HepG2 (cell line): ENCODE measurements at regions of chr16 and their contacts with region 1.

Region 1: GRCh38 chr16:6081320-6081976 is 983.9 kb upstream of the EEF2KMT start:
- DNase-seq: peak; percentile 20
- ATAC-seq: peak; percentile 53
- H3K4me3 ChIP-seq: no peak overlapping the region
- H3K27ac ChIP-seq: no peak overlapping the region
- H3K4me1 ChIP-seq: no peaks in the 10 kb centered on the region
- H3K27me3 ChIP-seq: no peaks in the 10 kb centered on the region
- CTCF ChIP-seq: peak; percentile 72
- EP300 ChIP-seq: no peak
- POLR2A ChIP-seq: no peak
- RAD21 ChIP-seq: no peak

Region 2: DNA sequence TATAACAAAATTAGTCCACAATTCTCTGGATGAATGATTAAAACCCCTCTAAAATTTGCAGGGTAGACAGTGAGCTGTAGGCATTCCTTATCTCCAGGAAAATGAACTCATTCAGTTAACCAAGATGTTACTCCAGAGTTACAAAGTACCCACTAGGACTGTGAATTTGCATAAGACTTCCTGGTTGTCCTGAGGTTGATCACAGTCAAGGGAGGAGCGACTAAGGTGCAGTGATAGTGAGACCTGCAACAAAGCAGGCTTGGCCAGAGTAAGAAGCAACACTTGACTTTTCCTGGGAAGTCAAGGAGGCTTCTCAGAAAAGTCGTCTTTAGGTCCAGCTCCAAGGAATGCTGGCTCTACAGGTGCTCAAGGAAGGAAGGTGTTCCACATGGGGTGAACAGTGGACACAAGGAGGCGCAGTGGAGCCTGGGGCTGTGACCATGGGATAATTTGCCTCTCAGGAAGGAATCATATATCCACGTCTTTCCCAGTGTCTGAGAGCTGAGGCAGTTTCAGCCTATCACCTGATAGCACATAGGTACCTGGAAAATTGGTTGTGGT is 162.8 kb before region 1 on chr16:
- CTCF ChIA-PET with region 1: no interaction called
- POLR2A ChIA-PET with region 1: no interaction called
- in situ Hi-C with region 1: no loop called
- intact Hi-C with region 1: loop called (anchors 2 kb)
- DNase-seq: peak; percentile 2
- ATAC-seq: peak; percentile 40; the same call in 1 of the 3 replicates
- H3K4me3 ChIP-seq: no peak overlapping the region
- H3K27ac ChIP-seq: no peak overlapping the region
- H3K4me1 ChIP-seq: no peaks in the 10 kb centered on the region
- H3K27me3 ChIP-seq: no peaks in the 10 kb centered on the region
- CTCF ChIP-seq: peak; percentile 38
- EP300 ChIP-seq: no peak
- POLR2A ChIP-seq: no peak
- RAD21 ChIP-seq: no peak

Region 3: DNA sequence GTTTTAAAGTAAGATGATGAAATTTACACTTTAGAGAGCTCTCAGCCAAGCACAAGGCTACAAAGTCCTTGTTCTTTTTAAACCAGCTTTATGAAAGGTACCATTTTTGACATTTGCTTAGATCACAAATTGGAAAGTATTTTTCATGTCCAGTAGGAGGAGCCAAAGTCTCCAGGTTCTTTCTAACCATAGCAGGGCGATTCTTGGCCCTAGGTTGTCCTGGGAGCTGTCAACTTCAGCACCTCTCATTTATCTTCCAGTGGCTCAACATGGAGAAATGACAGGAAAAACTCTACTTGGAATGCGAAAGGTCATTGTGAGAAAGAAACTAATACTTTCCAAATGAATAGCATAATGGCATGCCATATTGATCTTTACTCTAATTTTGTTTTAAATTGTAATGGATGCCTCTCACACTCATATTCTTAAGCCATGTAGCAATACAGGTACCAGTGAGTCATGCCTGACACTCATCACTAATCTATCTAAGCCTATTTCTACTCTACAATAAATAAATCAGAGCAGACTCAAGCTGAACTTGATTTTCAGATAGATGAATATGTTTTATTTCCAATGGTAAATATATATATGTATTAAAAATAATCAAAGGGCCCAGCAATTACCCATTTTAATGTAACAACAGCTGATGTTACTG is 64.8 kb before region 1 on chr16:
- CTCF ChIA-PET with region 1: interaction called, 3 read pairs
- POLR2A ChIA-PET with region 1: no interaction called
- in situ Hi-C with region 1: no loop called
- intact Hi-C with region 1: loop called (anchors 10 kb)
- DNase-seq: peak; percentile 29
- ATAC-seq: peak; percentile 67; the same call in 2 of the 3 replicates
- H3K4me3 ChIP-seq: no peak overlapping the region
- H3K27ac ChIP-seq: no peak overlapping the region
- H3K4me1 ChIP-seq: no peaks in the 10 kb centered on the region
- H3K27me3 ChIP-seq: peaks cover 0 to 3% of the 10 kb centered on the region in 2 experiments; a peak in 2 of 5 replicates
- CTCF ChIP-seq: peak; percentile 57
- EP300 ChIP-seq: no peak
- POLR2A ChIP-seq: no peak
- RAD21 ChIP-seq: no peak

Region 4: DNA sequence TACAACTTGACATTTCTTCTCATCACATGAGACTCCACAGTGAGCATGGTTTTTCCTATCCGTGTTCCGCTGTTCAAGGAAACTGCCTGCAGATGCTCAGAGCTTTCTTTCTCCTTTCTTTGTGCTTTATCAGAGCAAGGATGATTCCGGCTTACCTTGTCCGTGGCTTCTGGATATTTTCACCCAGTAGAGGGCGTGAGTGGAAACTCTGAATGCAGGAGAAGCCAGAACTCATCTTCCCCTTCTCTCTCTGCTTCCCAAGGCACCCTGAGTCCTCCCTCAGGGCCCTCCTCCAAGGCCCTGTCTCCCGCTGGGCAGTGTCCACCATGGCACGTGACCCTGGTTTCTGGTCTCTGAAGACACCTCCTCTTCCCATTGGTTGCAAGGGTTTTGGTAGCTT is 530.1 kb after region 1 on chr16:
- CTCF ChIA-PET with region 1: no interaction called
- POLR2A ChIA-PET with region 1: no interaction called
- in situ Hi-C with region 1: no loop called
- intact Hi-C with region 1: no loop called
- DNase-seq: no peak
- ATAC-seq: no peak
- H3K4me3 ChIP-seq: no peak overlapping the region
- H3K27ac ChIP-seq: no peak overlapping the region
- H3K4me1 ChIP-seq: no peaks in the 10 kb centered on the region
- H3K27me3 ChIP-seq: peaks cover 0 to 4% of the 10 kb centered on the region in 2 experiments; a peak in 1 of 5 replicates
- CTCF ChIP-seq: 0 out of 2 replicates have a peak, but pooled peaks have one; percentile 14
- EP300 ChIP-seq: no peak
- POLR2A ChIP-seq: no peak
- RAD21 ChIP-seq: no peak